CD4-positive, alpha-beta memory T cell (primary cell): ENCODE measurements at regions of chr9 and their contacts with region 1.

Region 1: DNA sequence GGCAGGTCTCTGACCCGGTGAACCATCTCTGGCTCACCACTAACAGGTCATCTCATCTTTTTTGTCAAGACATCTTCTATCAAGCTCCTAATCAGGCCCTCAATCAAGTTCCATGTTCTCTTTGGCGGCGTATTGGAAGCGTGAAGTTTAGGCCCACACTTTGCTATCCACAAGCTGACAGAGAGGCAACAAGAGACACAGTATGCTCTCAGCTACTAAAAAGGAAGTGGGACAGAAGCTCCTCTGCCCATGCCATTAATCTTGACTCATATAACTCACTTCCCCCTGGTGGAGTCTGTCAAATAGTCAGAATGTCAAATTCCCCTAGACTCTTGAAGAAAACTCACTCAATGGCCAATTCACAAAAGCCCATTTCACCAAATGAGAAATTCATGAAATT is 77.6 kb upstream of the TMC1 start:
- DNase-seq: peak in 3 of 5 donors; percentile 10 to 42 (median 14)
- H3K4me3 ChIP-seq: no peak overlapping the region
- H3K4me3 Mint-ChIP-seq: peak overlapping the region in 5 of 8 donors; percentile 25 to 67 (median 39)
- H3K27ac ChIP-seq: peak overlapping the region; percentile 5
- H3K27ac Mint-ChIP-seq: peak overlapping the region; percentile 48 to 92 (median 80)
- H3K4me1 ChIP-seq: peaks cover 36% of the 10 kb centered on the region
- H3K4me1 Mint-ChIP-seq: peaks cover 22 to 41% (median 31%) of the 10 kb centered on the region in 4 donors
- H3K27me3 ChIP-seq: no peaks in the 10 kb centered on the region
- H3K27me3 Mint-ChIP-seq: no peaks in the 10 kb centered on the region

Region 2: GRCh38 chr9:72292256-72292682 is 151.6 kb before region 1 on chr9:
- CTCF ChIA-PET with region 1: interaction called, 5 read pairs
- POLR2A ChIA-PET with region 1: no interaction called
- intact Hi-C with region 1: loop called (anchors 5 kb)
- DNase-seq: peak in 4 of 5 donors; percentile 24 to 37 (median 29)
- H3K4me3 ChIP-seq: no peak overlapping the region
- H3K4me3 Mint-ChIP-seq: no peak overlapping the region
- H3K27ac ChIP-seq: no peak overlapping the region
- H3K27ac Mint-ChIP-seq: no peak overlapping the region
- H3K4me1 ChIP-seq: no peaks in the 10 kb centered on the region
- H3K4me1 Mint-ChIP-seq: peaks cover 0 to 3% (median under 1%) of the 10 kb centered on the region in 4 donors
- H3K27me3 ChIP-seq: no peaks in the 10 kb centered on the region
- H3K27me3 Mint-ChIP-seq: peaks cover 5 to 6% of the 10 kb centered on the region in 2 donors

Region 3: DNA sequence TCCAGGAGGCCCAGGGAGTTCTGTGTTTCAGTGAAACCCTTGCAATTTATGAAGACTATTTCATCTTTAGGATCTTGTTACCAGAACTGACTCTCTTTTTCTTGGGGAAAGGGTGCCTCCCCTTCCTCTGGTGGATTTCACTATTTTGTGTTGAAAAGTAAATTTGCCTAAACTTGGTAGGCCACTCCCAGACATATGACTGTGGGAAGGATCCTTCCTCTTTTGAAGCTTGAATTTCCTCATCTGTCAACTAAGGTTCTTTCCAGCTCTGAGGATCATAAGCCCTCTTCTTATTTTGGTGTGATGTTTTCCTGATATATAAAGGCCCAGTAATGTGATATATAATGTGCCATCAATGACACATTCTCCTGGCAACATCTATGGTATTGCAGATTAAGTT is 19.7 kb before region 1 on chr9:
- CTCF ChIA-PET with region 1: no interaction called
- POLR2A ChIA-PET with region 1: no interaction called
- intact Hi-C with region 1: no loop called
- DNase-seq: no peak
- H3K4me3 ChIP-seq: no peak overlapping the region
- H3K4me3 Mint-ChIP-seq: no peak overlapping the region
- H3K27ac ChIP-seq: no peak overlapping the region
- H3K27ac Mint-ChIP-seq: no peak overlapping the region
- H3K4me1 ChIP-seq: no peaks in the 10 kb centered on the region
- H3K4me1 Mint-ChIP-seq: peaks cover 0 to 1% (median 0%) of the 10 kb centered on the region in 4 donors
- H3K27me3 ChIP-seq: no peaks in the 10 kb centered on the region
- H3K27me3 Mint-ChIP-seq: no peaks in the 10 kb centered on the region

Region 4: GRCh38 chr9:72476617-72477375 is 32.9 kb after region 1 on chr9:
- CTCF ChIA-PET with region 1: interaction called, 3 read pairs
- POLR2A ChIA-PET with region 1: no interaction called
- intact Hi-C with region 1: loop called (anchors 5 kb)
- DNase-seq: peak in 2 of 5 donors; percentile 1 to 60
- H3K4me3 ChIP-seq: no peak overlapping the region
- H3K4me3 Mint-ChIP-seq: peak overlapping the region in 1 of 8 donors; percentile 12
- H3K27ac ChIP-seq: no peak overlapping the region
- H3K27ac Mint-ChIP-seq: no peak overlapping the region
- H3K4me1 ChIP-seq: peaks cover 16% of the 10 kb centered on the region
- H3K4me1 Mint-ChIP-seq: peaks cover 12 to 35% (median 18%) of the 10 kb centered on the region in 4 donors
- H3K27me3 ChIP-seq: no peaks in the 10 kb centered on the region
- H3K27me3 Mint-ChIP-seq: no peaks in the 10 kb centered on the region

Region 5: GRCh38 chr9:72586388-72587130 is 142.7 kb after region 1 on chr9:
- CTCF ChIA-PET with region 1: interaction called, 3 read pairs
- POLR2A ChIA-PET with region 1: interaction called, 7 read pairs
- intact Hi-C with region 1: loop called (anchors 2 kb)
- DNase-seq: peak; percentile 23 to 68 (median 29)
- H3K4me3 ChIP-seq: no peak overlapping the region
- H3K4me3 Mint-ChIP-seq: peak overlapping the region in 7 of 8 donors; percentile 6 to 65 (median 26)
- H3K27ac ChIP-seq: no peak overlapping the region
- H3K27ac Mint-ChIP-seq: peak overlapping the region; percentile 19 to 81 (median 73)
- H3K4me1 ChIP-seq: peaks cover 10% of the 10 kb centered on the region
- H3K4me1 Mint-ChIP-seq: peaks cover 15 to 27% (median 17%) of the 10 kb centered on the region in 4 donors
- H3K27me3 ChIP-seq: no peaks in the 10 kb centered on the region
- H3K27me3 Mint-ChIP-seq: no peaks in the 10 kb centered on the region